ENCODE measurements at regions of chr1 and their contacts with region 1.

Region 1: DNA sequence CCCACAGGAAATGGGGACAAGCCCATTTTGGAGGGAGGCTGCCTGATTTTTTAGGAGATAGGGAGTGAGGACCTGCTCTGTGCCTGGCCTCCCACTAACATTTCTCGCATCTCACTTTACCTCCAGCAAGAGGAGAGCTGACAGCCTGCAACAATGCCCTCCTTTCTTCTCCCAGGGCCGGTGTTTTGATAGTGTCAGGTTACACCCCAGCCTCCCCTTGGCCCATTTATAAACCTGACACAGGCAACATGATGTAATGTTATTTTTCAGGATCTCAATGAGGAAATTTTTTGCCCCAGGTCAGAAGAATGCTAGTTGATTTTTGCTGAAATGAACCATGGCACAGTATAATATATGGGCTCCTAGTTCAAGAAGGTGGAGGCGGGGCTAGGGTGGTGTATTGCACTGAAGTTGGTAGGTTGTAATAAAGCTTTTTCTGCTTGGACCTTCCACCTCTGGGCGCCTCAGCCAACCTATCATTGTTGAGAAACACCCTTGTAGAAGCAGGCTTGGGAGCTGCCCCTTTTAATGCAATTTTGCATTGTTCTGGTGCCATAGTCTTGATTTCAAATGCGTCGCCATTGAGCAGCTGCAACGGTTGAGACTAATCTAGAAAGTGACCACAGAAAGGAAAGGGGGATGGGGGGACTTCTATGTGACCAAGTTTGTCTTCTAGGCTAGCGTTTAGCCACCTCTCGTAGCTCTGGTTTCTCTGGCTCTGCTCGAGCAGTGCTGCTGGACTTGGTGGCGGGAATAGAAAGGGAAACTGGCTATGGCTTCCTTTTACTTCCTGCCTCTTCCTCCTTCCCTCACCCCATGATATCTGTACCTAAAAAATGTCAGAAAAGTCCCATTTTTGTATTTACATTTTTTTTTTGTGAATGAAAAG is 53.0 kb downstream of the PBX1 start:
- DNase-seq: peak; percentile 86
- ATAC-seq: peak; percentile 56
- H3K4me3 ChIP-seq: no peak overlapping the region
- H3K27ac ChIP-seq: no peak overlapping the region; the same call in 1 of the 2 replicates
- H3K4me1 ChIP-seq: peaks cover 20% of the 10 kb centered on the region
- H3K27me3 ChIP-seq: no peaks in the 10 kb centered on the region
- CTCF ChIP-seq: no peak
- POLR2A ChIP-seq: no peak
- RAD21 ChIP-seq: no peak

Region 2: DNA sequence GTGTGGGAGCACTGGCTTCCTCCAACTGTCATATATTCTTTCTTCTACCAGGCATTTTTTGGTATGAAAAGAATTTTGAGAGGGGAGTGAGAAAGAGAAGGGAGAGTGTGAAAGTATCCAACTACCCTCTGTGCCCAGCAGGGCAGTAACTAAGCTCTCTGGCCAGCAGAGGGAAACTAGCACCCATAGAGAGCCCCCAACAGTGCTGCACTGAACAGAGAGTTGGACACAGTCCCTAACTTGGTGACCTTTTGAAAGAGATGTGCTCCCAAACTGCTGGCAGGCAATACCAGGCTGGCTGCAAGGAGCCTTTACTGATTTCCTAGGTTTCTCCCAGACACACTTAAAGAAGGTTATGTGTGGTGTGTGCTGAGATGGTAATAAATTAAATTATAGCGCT is 171.8 kb before region 1 on chr1:
- CTCF ChIA-PET with region 1: no interaction called
- POLR2A ChIA-PET with region 1: no interaction called
- dilution Hi-C with region 1: no loop called
- in situ Hi-C with region 1: no loop called
- intact Hi-C with region 1: loop called (anchors 5 kb)
- DNase-seq: no peak
- ATAC-seq: peak; percentile 80
- H3K4me3 ChIP-seq: no peak overlapping the region
- H3K27ac ChIP-seq: no peak overlapping the region
- H3K4me1 ChIP-seq: no peaks in the 10 kb centered on the region
- H3K27me3 ChIP-seq: no peaks in the 10 kb centered on the region; the same call in 1 of the 2 replicates
- CTCF ChIP-seq: peak; percentile 31; the same call in 1 of the 2 replicates
- POLR2A ChIP-seq: no peak
- RAD21 ChIP-seq: peak; percentile 40

Region 3: DNA sequence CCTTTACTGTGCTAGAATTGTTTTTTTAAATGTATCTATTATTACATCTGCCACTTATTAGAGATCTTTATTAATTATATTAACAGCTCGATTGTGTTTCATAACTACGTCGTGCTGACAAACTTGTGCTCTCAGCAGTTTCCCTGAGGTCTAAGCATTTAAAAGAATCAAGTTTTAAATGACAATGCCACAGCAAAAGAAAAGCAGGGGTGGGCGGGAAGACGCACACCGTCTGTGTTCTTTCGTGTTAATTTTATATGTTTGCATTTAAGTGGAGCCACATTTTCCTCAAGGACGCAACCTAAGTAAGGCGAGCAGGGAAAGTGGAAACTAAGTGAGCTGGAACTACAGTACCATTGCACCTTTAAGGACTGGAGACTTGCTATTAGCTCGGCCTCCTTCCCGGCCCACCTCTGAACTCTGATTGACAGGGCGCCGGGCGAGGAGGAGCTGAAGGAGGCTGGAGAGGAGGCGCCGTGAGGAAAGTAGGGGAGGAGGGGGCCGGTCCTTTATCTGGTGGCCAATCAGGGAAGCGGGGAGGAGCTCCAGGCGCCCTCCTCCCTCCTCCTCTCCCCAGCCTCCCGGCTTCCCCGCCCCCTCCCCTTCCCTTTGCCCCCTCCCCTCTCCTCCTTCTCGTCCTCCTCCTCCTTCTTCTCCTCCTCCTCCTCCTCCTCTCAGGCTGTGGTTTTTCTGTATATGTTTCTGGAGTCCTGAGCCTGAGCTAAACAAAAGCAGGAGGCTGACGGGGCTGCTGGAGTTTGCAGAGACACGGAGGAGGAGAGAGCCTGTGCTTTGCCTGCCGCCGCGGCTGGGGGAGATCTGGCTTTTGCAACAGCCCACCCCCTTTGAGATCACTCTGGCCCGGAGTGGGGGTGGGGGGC is 53.3 kb before region 1 on chr1 and contains the start of gene PBX1:
- CTCF ChIA-PET with region 1: no interaction called
- POLR2A ChIA-PET with region 1: interaction called, 3 read pairs
- dilution Hi-C with region 1: no loop called
- in situ Hi-C with region 1: no loop called
- intact Hi-C with region 1: loop called (anchors 2 kb)
- DNase-seq: peak; percentile 98
- ATAC-seq: peak; percentile 98
- H3K4me3 ChIP-seq: peak within 1 kb of the TSS; percentile 75
- H3K27ac ChIP-seq: peak within 1 kb of the TSS; percentile 99
- H3K4me1 ChIP-seq: no peaks in the 10 kb centered on the region
- H3K27me3 ChIP-seq: no peaks in the 10 kb centered on the region
- CTCF ChIP-seq: no peak
- POLR2A ChIP-seq: peak; percentile 88
- RAD21 ChIP-seq: no peak; the same call in 1 of the 2 replicates
- total RNA-seq, gene PBX1: 17.5 and 17.9 TPM in 2 replicates

Region 4: DNA sequence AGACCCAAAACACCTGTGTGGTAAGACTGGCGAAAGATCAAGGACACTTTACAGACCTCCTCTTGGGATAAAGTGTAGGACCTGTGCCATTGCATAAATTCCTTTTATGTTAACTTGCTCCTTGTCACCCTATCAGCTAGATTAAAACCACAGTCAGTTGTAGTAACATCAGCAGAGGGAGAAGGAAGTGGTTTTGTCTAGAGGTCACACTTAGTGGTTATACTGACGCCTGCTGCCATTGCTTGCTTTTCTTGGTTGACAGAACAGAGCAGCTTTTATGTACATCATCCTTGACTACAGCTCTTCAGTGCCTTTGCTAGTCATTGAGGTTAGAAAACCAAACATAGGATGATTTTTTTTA is 48.4 kb after region 1 on chr1:
- CTCF ChIA-PET with region 1: no interaction called
- POLR2A ChIA-PET with region 1: no interaction called
- dilution Hi-C with region 1: no loop called
- in situ Hi-C with region 1: no loop called
- intact Hi-C with region 1: no loop called
- DNase-seq: peak; percentile 67
- ATAC-seq: peak; percentile 48
- H3K4me3 ChIP-seq: no peak overlapping the region
- H3K27ac ChIP-seq: no peak overlapping the region
- H3K4me1 ChIP-seq: peaks cover 4% of the 10 kb centered on the region; the same call in 1 of the 2 replicates
- H3K27me3 ChIP-seq: no peaks in the 10 kb centered on the region
- CTCF ChIP-seq: no peak
- POLR2A ChIP-seq: no peak
- RAD21 ChIP-seq: no peak